GM13976 (cell line): ENCODE measurements at regions of chr2 and their contacts with region 1.

Region 1: GRCh38 chr2:68909793-68910674 is 38.8 kb upstream of the BMP10 start:
- DNase-seq: peak; percentile 66
- CTCF ChIP-seq: peak; percentile 77

Region 2: GRCh38 chr2:68469935-68470334 is 440.1 kb before region 1 on chr2:
- in situ Hi-C with region 1: loop called (anchors 10 kb)
- DNase-seq: no peak
- CTCF ChIP-seq: no peak

Region 3: DNA sequence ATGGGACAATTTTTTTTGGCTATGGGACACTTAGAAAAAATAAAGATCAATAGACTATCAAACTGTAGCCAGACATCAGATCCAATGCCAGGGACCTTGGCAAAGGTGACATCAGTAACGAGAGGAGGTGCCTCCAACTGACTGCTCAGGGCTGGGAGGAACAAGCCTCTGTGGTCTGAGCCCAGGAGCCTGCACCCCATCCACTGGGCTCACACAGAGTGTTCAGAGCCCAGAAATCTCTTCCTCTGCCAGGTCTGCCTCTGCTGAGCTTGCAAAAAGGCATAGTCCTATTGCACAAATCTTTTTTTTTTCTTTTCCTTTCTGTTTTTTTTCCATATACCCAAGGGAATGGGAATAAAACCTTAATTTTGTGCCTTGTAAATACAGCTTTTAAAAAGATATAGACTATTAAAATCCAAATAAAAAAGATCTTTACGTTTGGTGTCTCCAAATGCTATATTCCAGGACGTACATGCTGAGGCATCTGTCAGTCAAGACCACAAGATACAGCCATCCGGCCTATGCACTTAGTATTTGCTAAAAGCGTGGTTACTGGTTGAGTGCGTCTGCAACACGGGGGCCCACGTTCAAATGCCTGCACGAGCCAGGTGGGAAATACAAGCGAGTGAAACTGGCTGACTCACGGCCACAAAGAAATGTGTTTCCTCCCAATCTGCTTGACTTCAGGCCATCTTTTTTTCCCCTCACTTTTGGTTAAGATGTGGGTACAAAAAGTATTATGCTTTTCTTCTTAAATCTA is 183.2 kb before region 1 on chr2:
- in situ Hi-C with region 1: loop called (anchors 25 kb)
- DNase-seq: peak; percentile 52
- CTCF ChIP-seq: no peak